ENCODE measurements at regions of chr15 and their contacts with region 1.

Region 1: GRCh38 chr15:72495007-72495406 is 20.9 kb downstream of the ARIH1 start:
- DNase-seq: no peak
- ATAC-seq: peak; percentile 85
- H3K4me3 ChIP-seq: no peak overlapping the region
- H3K27ac ChIP-seq: no peak overlapping the region
- H3K4me1 ChIP-seq: no peaks in the 10 kb centered on the region
- H3K27me3 ChIP-seq: no peaks in the 10 kb centered on the region
- CTCF ChIP-seq: no peak
- EP300 ChIP-seq: no peak
- POLR2A ChIP-seq: no peak
- RAD21 ChIP-seq: no peak

Region 2: GRCh38 chr15:72319985-72320671 is 174.9 kb before region 1 on chr15 and contains the start of gene CELF6:
- CTCF ChIA-PET with region 1: no interaction called
- POLR2A ChIA-PET with region 1: no interaction called
- RAD21 ChIA-PET with region 1: no interaction called
- SMC1A ChIA-PET with region 1: no interaction called
- in situ Hi-C with region 1: no loop called
- intact Hi-C with region 1: no loop called
- DNase-seq: peak; percentile 8
- ATAC-seq: peak; percentile 88
- H3K4me3 ChIP-seq: peak within 1 kb of the TSS; percentile 60
- H3K27ac ChIP-seq: no peak within 1 kb of the TSS
- H3K4me1 ChIP-seq: 0 out of 2 replicates have a peak, but pooled peaks cover 2% of the 10 kb centered on the region
- H3K27me3 ChIP-seq: no peaks in the 10 kb centered on the region
- CTCF ChIP-seq: no peak
- EP300 ChIP-seq: no peak
- POLR2A ChIP-seq: peak; percentile 59; the same call in 1 of the 2 replicates
- RAD21 ChIP-seq: no peak
- polyA plus RNA-seq, gene CELF6: 0.18 to 0.20 TPM

Region 3: GRCh38 chr15:72482275-72482674 is 12.7 kb before region 1 on chr15:
- CTCF ChIA-PET with region 1: interaction called, 4 read pairs
- POLR2A ChIA-PET with region 1: interaction called, 3 read pairs
- RAD21 ChIA-PET with region 1: interaction called, 3 read pairs
- SMC1A ChIA-PET with region 1: interaction called, 14 read pairs
- in situ Hi-C with region 1: no loop called
- intact Hi-C with region 1: no loop called
- DNase-seq: no peak
- ATAC-seq: peak; percentile 36
- H3K4me3 ChIP-seq: no peak overlapping the region
- H3K27ac ChIP-seq: no peak overlapping the region
- H3K4me1 ChIP-seq: peaks cover 3% of the 10 kb centered on the region; the same call in 1 of the 2 replicates
- H3K27me3 ChIP-seq: no peaks in the 10 kb centered on the region
- CTCF ChIP-seq: no peak
- EP300 ChIP-seq: no peak
- POLR2A ChIP-seq: no peak
- RAD21 ChIP-seq: no peak

Region 4: DNA sequence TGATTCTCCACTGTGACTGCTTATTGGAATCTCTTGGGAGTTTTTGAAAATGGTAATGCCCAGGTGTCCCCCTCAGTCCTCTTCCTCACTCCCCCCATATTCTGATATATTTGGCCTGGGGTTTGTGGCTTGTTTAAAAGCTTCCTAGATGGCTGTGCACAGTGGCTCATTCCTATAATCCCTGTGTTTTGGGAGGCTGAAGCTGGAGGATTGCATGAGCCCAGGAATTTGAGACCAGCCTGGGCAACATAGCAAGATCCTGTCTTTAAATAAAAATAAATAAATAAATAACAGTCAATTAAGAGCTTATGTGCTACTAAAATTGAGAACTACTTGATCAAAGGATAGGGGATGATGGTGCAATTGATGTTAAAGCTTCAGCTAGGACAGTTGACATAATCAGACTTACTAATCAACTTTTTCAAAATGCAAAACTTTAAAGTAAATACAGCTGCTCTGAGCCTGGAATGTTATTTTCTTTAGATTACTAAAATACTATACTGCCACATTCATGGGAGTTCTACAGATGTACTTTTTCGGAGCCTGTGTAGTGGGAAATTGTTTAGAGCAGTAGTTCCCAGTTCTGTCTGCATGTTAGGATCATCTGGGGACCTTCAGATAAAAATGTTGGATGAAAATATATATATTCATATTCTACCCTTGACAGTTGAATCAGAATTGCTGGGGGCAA is 12.5 kb after region 1 on chr15:
- CTCF ChIA-PET with region 1: interaction called, 8 read pairs
- POLR2A ChIA-PET with region 1: interaction called, 4 read pairs
- RAD21 ChIA-PET with region 1: interaction called, 4 read pairs
- SMC1A ChIA-PET with region 1: interaction called, 13 read pairs
- in situ Hi-C with region 1: no loop called
- intact Hi-C with region 1: no loop called
- DNase-seq: no peak
- ATAC-seq: no peak
- H3K4me3 ChIP-seq: no peak overlapping the region
- H3K27ac ChIP-seq: no peak overlapping the region
- H3K4me1 ChIP-seq: no peaks in the 10 kb centered on the region
- H3K27me3 ChIP-seq: no peaks in the 10 kb centered on the region
- CTCF ChIP-seq: no peak
- EP300 ChIP-seq: no peak
- POLR2A ChIP-seq: no peak
- RAD21 ChIP-seq: no peak